ENCODE measurements at regions of chr12 and their contacts with region 1.

Region 1: DNA sequence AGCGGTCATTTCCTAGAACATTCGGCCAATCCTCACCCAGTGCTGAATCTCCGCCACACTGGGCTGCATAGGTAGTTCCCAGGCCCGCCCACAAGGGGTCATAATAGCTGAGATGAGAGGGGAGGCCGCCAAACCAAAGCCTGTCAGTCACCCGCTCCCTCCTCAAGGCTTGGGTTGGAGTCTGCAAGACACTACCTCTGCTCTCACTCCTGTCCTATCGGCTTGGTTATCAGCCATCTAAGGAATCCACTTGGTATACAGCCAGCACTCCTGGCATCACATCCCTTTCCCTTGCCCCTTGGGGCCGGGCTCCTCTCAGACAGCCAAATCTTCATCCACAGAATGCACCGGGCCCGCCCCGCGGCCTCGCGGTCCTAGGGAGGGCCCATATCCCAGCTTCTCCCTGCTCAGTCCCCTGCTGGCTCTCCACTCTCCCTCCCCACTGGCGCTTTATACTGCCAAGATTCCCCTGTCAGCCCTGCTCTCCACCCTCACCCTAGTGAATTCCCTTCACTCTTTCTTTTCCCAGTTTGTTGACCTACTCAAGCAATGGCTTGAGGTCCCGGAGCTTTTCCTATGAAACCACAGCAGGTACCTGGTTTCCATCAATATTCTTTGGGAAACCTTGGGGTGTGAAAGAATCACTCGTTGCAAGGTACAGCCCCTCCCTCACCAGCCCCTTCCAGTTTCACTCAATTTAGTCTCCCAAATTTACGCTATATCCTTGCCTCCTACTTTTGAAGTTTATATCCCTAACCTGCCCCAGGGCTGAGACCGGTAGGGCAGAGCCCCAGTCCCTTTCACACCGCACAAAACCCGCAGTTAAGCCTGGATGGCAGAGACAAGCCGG is 1.4 kb downstream of the IFFO1 start:
- DNase-seq: peak; percentile 89
- H3K4me3 ChIP-seq: peak overlapping the region; percentile 79 to 85
- H3K27ac ChIP-seq: peak overlapping the region; percentile 70 to 93; a peak in 3 of 4 replicates
- H3K4me1 ChIP-seq: peaks cover 36 to 40% of the 10 kb centered on the region in 2 experiments
- H3K27me3 ChIP-seq: no peaks in the 10 kb centered on the region
- CTCF ChIP-seq: peak; percentile 69
- EP300 ChIP-seq: no peak
- RAD21 ChIP-seq: peak; percentile 51

Region 2: DNA sequence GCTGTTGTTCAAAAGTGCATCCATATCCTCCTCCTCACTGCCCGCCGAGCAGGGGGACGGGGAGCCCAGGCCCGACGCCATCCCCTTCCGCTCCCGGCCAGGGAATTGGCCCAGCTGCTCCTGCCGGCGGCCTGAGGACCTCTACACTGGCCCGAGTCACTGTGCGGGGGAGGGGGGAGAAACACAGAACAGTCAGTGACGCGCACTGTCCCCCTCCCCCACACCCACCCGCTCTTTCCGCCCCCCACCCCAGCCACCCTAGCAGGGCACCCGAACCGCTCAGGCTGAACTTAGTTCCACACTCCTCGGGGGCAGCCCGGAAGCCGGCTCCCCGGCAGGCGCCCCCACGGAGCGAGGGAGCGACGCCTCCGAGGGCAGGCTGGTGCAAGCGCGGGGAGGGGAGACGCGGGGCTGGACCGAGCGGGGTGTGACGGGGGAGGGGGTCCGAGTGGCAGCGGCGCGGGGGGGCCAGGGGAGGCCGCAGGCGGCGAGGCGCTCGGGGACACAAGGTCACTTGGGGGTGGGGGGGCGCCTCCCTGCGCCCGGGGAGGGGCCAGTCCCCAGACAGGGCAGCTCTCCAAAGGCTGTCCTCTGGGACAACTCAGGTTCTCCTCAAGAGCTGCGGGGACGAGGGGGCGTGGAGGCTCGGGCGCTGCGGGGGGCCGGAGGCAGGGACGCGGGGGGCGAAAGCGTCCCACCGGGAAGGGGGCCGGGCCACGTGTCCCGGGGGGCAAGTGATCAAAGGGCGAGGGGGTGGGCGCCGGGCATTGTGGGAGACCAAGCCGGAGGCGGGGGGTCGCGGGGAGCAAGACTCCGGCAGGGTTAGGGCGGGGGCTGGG is 52.1 kb after region 1 on chr12:
- CTCF ChIA-PET with region 1: interaction called, 10 read pairs
- POLR2A ChIA-PET with region 1: no interaction called
- DNase-seq: peak; percentile 72
- H3K4me3 ChIP-seq: peak overlapping the region; percentile 48 to 90
- H3K27ac ChIP-seq: peak overlapping the region; percentile 70 to 94
- H3K4me1 ChIP-seq: peaks cover 29 to 50% of the 10 kb centered on the region in 2 experiments
- H3K27me3 ChIP-seq: no peaks in the 10 kb centered on the region
- CTCF ChIP-seq: no peak
- EP300 ChIP-seq: no peak
- RAD21 ChIP-seq: no peak

Region 3: GRCh38 chr12:6676962-6677361 is 122.6 kb after region 1 on chr12:
- CTCF ChIA-PET with region 1: no interaction called
- POLR2A ChIA-PET with region 1: no interaction called
- DNase-seq: no peak
- H3K4me3 ChIP-seq: no peak overlapping the region
- H3K27ac ChIP-seq: no peak overlapping the region
- H3K4me1 ChIP-seq: no peaks in the 10 kb centered on the region
- H3K27me3 ChIP-seq: no peaks in the 10 kb centered on the region
- CTCF ChIP-seq: no peak
- EP300 ChIP-seq: no peak
- RAD21 ChIP-seq: no peak

Region 4: GRCh38 chr12:6851921-6852650 is 297.7 kb after region 1 on chr12 and contains the start of gene USP5:
- CTCF ChIA-PET with region 1: no interaction called
- POLR2A ChIA-PET with region 1: no interaction called
- DNase-seq: peak; percentile 92
- H3K4me3 ChIP-seq: peak within 1 kb of the TSS; percentile 70 to 76
- H3K27ac ChIP-seq: peak within 1 kb of the TSS; percentile 73 to 97
- H3K4me1 ChIP-seq: peaks cover 7 to 17% of the 10 kb centered on the region in 2 experiments
- H3K27me3 ChIP-seq: no peaks in the 10 kb centered on the region
- CTCF ChIP-seq: 0 out of 2 replicates have a peak, but pooled peaks have one; percentile 7
- EP300 ChIP-seq: no peak
- RAD21 ChIP-seq: no peak
- polyA plus RNA-seq, gene USP5: 97.2 and 100 TPM in 2 replicates

Region 5: GRCh38 chr12:7042842-7043241 is 488.4 kb after region 1 on chr12:
- CTCF ChIA-PET with region 1: no interaction called
- POLR2A ChIA-PET with region 1: no interaction called
- DNase-seq: peak; percentile 41
- H3K4me3 ChIP-seq: no peak overlapping the region; a peak in 1 of 4 replicates
- H3K27ac ChIP-seq: no peak overlapping the region
- H3K4me1 ChIP-seq: no peaks in the 10 kb centered on the region
- H3K27me3 ChIP-seq: no peaks in the 10 kb centered on the region
- CTCF ChIP-seq: peak; percentile 45
- EP300 ChIP-seq: no peak
- RAD21 ChIP-seq: peak; percentile 48